Mammary epithelial cell (primary cell): ENCODE measurements at regions of chr1 and their contacts with region 1.

Region 1: GRCh38 chr1:114610546-114611245 is 29.3 kb upstream of the BCAS2 start:
- DNase-seq: peak; percentile 99
- H3K4me3 ChIP-seq: peak overlapping the region in 2 of 3 experiments; percentile 28 to 31
- H3K27ac ChIP-seq: peak overlapping the region; percentile 100
- H3K4me1 ChIP-seq: peaks cover 18% of the 10 kb centered on the region
- H3K27me3 ChIP-seq: no peaks in the 10 kb centered on the region
- CTCF ChIP-seq: no peak

Region 2: GRCh38 chr1:114510274-114511031 is 100.2 kb before region 1 on chr1:
- CTCF ChIA-PET with region 1: no interaction called
- dilution Hi-C with region 1: no loop called
- in situ Hi-C with region 1: no loop called
- intact Hi-C with region 1: no loop called
- DNase-seq: peak; percentile 63
- H3K4me3 ChIP-seq: peak overlapping the region; percentile 99
- H3K27ac ChIP-seq: peak overlapping the region; percentile 82
- H3K4me1 ChIP-seq: peaks cover 14% of the 10 kb centered on the region
- H3K27me3 ChIP-seq: no peaks in the 10 kb centered on the region
- CTCF ChIP-seq: no peak

Region 3: DNA sequence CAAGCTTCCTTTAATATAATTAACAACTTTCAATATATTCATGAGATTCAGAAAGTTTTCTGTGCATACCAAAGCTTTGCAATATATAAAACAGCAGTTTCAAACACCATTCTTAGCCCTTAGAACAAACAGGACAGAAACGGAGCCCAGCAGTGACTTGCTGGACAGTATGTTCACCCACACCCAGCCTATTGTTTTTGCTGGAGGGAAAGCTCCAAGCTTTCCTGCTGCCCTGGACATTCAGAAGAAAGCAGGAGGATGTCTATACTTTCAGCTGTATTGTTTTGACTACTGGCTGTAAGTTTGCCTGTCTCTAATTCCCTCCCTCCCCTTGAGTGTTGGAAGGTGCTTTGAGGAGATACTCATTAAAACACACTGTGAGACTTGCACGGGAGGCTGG is 49.5 kb after region 1 on chr1:
- CTCF ChIA-PET with region 1: no interaction called
- dilution Hi-C with region 1: loop called (anchors 5 kb)
- in situ Hi-C with region 1: loop called in 1 of 2 experiments (anchors 10 kb)
- intact Hi-C with region 1: no loop called
- DNase-seq: no peak
- H3K4me3 ChIP-seq: no peak overlapping the region
- H3K27ac ChIP-seq: no peak overlapping the region
- H3K4me1 ChIP-seq: peaks cover 5% of the 10 kb centered on the region
- H3K27me3 ChIP-seq: no peaks in the 10 kb centered on the region
- CTCF ChIP-seq: no peak

Region 4: DNA sequence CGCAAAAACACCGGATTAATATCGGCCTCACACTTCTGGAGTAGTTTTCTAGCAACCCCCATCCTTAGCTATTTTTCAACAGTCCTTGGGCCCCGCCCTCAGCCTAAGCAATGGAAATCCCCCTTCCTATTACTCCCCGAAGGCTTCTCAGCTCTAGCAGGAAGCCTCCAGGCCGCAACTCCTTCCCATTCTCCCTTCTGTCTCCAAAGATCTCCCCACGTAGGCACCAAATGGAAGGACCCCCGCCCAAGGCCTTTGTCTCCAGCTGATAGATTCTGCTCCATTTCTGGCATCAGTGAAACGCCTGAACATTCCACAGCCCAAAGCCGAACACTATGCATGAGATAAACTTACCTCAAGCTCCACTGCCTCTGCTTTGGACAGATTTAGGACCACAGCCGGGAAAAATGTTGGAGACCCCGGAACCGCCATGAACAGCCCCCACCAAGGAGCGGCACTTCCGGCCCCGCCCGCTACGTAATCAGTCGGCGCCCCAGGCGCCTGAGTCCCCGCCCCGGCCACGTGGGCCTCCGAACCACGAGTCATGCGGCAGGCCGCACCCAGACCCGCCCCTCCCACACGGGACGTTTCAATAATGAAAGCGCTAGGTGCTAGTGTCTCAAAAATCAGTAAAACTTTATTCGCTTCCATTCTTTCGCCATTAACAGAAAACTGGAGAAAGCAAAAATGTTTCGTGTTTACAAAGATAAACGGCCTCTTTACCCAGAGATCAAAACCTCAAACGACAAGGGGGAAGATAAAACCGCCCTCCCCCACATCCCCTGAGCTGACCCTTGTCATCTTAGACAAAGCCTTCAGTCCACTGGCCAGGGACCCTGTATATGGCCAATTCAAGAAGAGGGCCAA is 105.8 kb after region 1 on chr1 and contains the start of gene NRAS:
- CTCF ChIA-PET with region 1: no interaction called
- dilution Hi-C with region 1: no loop called
- in situ Hi-C with region 1: no loop called
- intact Hi-C with region 1: loop called (anchors 2 kb)
- DNase-seq: peak; percentile 88
- H3K4me3 ChIP-seq: peak within 1 kb of the TSS; percentile 70 to 94 (median 73)
- H3K27ac ChIP-seq: peak within 1 kb of the TSS; percentile 99
- H3K4me1 ChIP-seq: peaks cover 7% of the 10 kb centered on the region
- H3K27me3 ChIP-seq: no peaks in the 10 kb centered on the region
- CTCF ChIP-seq: no peak
- total RNA-seq, gene NRAS: 44.9 to 67.3 TPM

Region 5: GRCh38 chr1:114956564-114956963 is 345.9 kb after region 1 on chr1:
- CTCF ChIA-PET with region 1: no interaction called
- dilution Hi-C with region 1: no loop called
- in situ Hi-C with region 1: no loop called
- intact Hi-C with region 1: loop called (anchors 2 kb)
- DNase-seq: peak; percentile 23
- H3K4me3 ChIP-seq: no peak overlapping the region
- H3K27ac ChIP-seq: no peak overlapping the region
- H3K4me1 ChIP-seq: no peaks in the 10 kb centered on the region
- H3K27me3 ChIP-seq: peaks cover 2% of the 10 kb centered on the region
- CTCF ChIP-seq: peak; percentile 74 to 84